ENCODE measurements at regions of chr1 and their contacts with region 1.

Region 1: DNA sequence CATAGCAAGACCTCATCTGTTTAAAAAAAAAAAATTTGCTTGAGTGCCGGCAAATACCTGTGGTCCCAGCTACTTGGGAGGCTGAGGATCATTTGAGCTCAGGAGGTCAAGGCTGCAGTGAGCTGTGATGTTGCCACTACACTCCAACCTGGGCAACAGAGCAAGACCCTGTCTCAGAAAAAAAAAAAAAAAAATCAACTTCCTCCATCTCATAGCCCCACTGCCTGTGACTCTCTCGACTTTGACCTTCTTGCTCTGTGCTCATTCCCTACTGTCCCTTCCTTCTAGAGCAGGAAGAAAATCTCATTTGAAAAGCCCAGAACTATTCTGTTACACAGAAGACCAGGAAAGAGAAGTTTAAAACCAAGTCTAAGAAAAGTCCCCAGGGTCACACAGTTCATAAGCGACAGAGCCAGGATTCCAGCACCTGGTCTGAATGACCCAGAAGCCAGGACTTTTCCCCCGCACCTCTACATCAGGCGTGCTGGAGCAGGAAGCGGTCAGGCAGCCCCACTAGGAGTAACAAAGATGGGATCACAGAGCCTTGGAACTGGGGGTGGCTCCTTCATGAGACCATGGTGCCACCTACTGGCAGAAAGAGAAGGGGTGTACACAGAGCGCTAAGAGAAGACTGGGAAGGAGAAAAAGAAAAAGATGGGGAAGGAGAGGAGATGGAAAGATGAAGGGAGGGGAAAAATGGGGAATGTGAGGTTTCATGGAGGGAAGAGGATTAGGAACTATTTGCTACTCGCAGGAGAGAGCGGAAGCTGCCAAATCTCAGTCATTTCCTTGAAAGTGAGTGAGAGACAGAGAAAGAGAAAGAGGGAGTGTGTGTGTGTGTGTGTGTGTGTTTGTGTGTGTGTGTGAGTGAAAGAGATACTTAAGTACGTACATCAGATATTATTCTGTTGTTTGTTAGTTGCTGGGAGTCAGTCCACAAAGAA is 3.1 kb upstream of the P3R3URF start:
- DNase-seq: peak; percentile 79 to 87 (median 81)
- H3K4me3 ChIP-seq: no peak overlapping the region
- H3K27ac ChIP-seq: no peak overlapping the region
- H3K4me1 ChIP-seq: peaks cover 3% of the 10 kb centered on the region
- H3K27me3 ChIP-seq: no peaks in the 10 kb centered on the region
- CTCF ChIP-seq: peak; percentile 71 to 87 (median 83)
- EP300 ChIP-seq: no peak
- POLR2A ChIP-seq: no peak

Region 2: GRCh38 chr1:45884700-45885099 is 294.7 kb before region 1 on chr1:
- intact Hi-C with region 1: loop called in 1 of 4 experiments (anchors 10 kb)
- DNase-seq: no peak
- H3K4me3 ChIP-seq: no peak overlapping the region
- H3K27ac ChIP-seq: no peak overlapping the region
- H3K4me1 ChIP-seq: no peaks in the 10 kb centered on the region
- H3K27me3 ChIP-seq: no peaks in the 10 kb centered on the region
- CTCF ChIP-seq: no peak
- EP300 ChIP-seq: no peak
- POLR2A ChIP-seq: no peak

Region 3: GRCh38 chr1:46036894-46037839 is 142.2 kb before region 1 on chr1:
- intact Hi-C with region 1: loop called (anchors 1 to 5 kb)
- DNase-seq: peak; percentile 78 to 92 (median 88)
- H3K4me3 ChIP-seq: no peak overlapping the region
- H3K27ac ChIP-seq: no peak overlapping the region
- H3K4me1 ChIP-seq: peaks cover 8% of the 10 kb centered on the region
- H3K27me3 ChIP-seq: no peaks in the 10 kb centered on the region
- CTCF ChIP-seq: peak; percentile 89 to 92 (median 90)
- EP300 ChIP-seq: no peak
- POLR2A ChIP-seq: no peak

Region 4: GRCh38 chr1:46053734-46054133 is 125.7 kb before region 1 on chr1:
- intact Hi-C with region 1: no loop called
- DNase-seq: no peak
- H3K4me3 ChIP-seq: no peak overlapping the region
- H3K27ac ChIP-seq: no peak overlapping the region
- H3K4me1 ChIP-seq: no peaks in the 10 kb centered on the region
- H3K27me3 ChIP-seq: no peaks in the 10 kb centered on the region
- CTCF ChIP-seq: no peak
- EP300 ChIP-seq: no peak
- POLR2A ChIP-seq: no peak

Region 5: GRCh38 chr1:46224966-46225365 is 45.6 kb after region 1 on chr1:
- intact Hi-C with region 1: loop called in 1 of 4 experiments (anchors 2 kb)
- DNase-seq: no peak
- H3K4me3 ChIP-seq: no peak overlapping the region
- H3K27ac ChIP-seq: no peak overlapping the region
- H3K4me1 ChIP-seq: no peaks in the 10 kb centered on the region
- H3K27me3 ChIP-seq: no peaks in the 10 kb centered on the region
- CTCF ChIP-seq: no peak
- EP300 ChIP-seq: no peak
- POLR2A ChIP-seq: no peak

Measured in ovary (tissue), 10 donors.